MCF 10A (cell line): ENCODE measurements at regions of chr3 and their contacts with region 1.

Region 1: GRCh38 chr3:49454458-49454857 is 15.6 kb upstream of the DAG1 start:
- DNase-seq: peak; percentile 68
- H3K4me3 Mint-ChIP-seq: no peak overlapping the region
- H3K27ac Mint-ChIP-seq: no peak overlapping the region
- H3K4me1 Mint-ChIP-seq: peaks cover 10% of the 10 kb centered on the region
- H3K27me3 Mint-ChIP-seq: no peaks in the 10 kb centered on the region
- CTCF ChIP-seq: no peak

Region 2: GRCh38 chr3:48989796-48990635 is 464.4 kb before region 1 on chr3 and contains the start of gene P4HTM:
- CTCF ChIA-PET with region 1: interaction called, 7 read pairs
- POLR2A ChIA-PET with region 1: no interaction called
- intact Hi-C with region 1: loop called (anchors 2 kb)
- DNase-seq: peak; percentile 82
- H3K4me3 Mint-ChIP-seq: peak within 1 kb of the TSS; percentile 89
- H3K27ac Mint-ChIP-seq: peak within 1 kb of the TSS; percentile 71
- H3K4me1 Mint-ChIP-seq: peaks cover 29% of the 10 kb centered on the region
- H3K27me3 Mint-ChIP-seq: no peaks in the 10 kb centered on the region
- CTCF ChIP-seq: peak; percentile 13
- total RNA-seq, gene P4HTM: 18.8 and 26.1 TPM in 2 replicates

Region 3: DNA sequence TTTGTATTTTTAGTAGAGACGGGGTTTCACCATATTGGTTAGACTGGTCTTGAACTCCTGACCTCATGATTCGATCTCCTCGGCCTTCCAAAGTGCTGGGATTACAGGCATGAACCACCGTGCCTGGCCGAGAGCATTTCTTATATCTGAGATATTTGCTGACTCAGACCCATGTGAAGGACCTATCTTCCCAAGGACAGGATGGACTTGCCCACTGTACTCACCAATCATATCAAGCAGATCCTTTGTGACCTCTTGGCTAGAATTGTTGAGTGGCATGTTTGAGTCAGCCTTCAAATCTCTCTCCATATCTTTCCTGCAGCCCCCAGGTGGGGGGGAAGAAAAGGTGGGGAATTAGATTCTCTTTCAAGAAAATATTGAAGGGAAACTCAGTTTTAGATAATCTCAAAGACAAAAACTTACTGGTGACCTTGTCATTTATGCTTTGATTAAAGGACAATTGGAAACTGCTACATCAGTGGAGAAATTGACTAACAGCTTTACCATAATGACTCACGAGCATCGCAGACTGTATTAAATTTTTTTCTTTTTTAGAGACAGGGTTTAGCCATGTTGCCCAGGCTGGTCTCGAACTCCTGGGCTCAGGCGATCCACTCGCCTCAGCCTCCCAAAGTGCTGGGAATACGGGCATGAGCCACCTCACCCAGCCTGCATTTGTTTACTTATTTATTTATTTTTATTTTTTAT is 180.5 kb before region 1 on chr3:
- CTCF ChIA-PET with region 1: no interaction called
- POLR2A ChIA-PET with region 1: no interaction called
- intact Hi-C with region 1: no loop called
- DNase-seq: no peak
- H3K4me3 Mint-ChIP-seq: no peak overlapping the region
- H3K27ac Mint-ChIP-seq: no peak overlapping the region
- H3K4me1 Mint-ChIP-seq: no peaks in the 10 kb centered on the region
- H3K27me3 Mint-ChIP-seq: no peaks in the 10 kb centered on the region
- CTCF ChIP-seq: no peak

Region 4: GRCh38 chr3:49295489-49296058 is 158.9 kb before region 1 on chr3:
- CTCF ChIA-PET with region 1: interaction called, 5 read pairs
- POLR2A ChIA-PET with region 1: no interaction called
- intact Hi-C with region 1: loop called (anchors 1 kb)
- DNase-seq: peak; percentile 35
- H3K4me3 Mint-ChIP-seq: no peak overlapping the region
- H3K27ac Mint-ChIP-seq: peak overlapping the region; percentile 23
- H3K4me1 Mint-ChIP-seq: peaks cover 7% of the 10 kb centered on the region
- H3K27me3 Mint-ChIP-seq: no peaks in the 10 kb centered on the region
- CTCF ChIP-seq: peak; percentile 55

Region 5: GRCh38 chr3:49339945-49340800 is 114.3 kb before region 1 on chr3 and contains the start of gene USP4:
- CTCF ChIA-PET with region 1: interaction called, 5 read pairs
- POLR2A ChIA-PET with region 1: no interaction called
- intact Hi-C with region 1: loop called (anchors 1 kb)
- DNase-seq: peak; percentile 89
- H3K4me3 Mint-ChIP-seq: peak within 1 kb of the TSS; percentile 96
- H3K27ac Mint-ChIP-seq: peak within 1 kb of the TSS; percentile 87
- H3K4me1 Mint-ChIP-seq: peaks cover 19% of the 10 kb centered on the region
- H3K27me3 Mint-ChIP-seq: no peaks in the 10 kb centered on the region
- CTCF ChIP-seq: peak; percentile 26
- total RNA-seq, gene USP4: 52.6 and 54.1 TPM in 2 replicates

Region 6: GRCh38 chr3:49383387-49383786 is 71.1 kb before region 1 on chr3:
- CTCF ChIA-PET with region 1: interaction called, 3 read pairs
- POLR2A ChIA-PET with region 1: no interaction called
- intact Hi-C with region 1: loop called (anchors 2 kb)
- DNase-seq: no peak
- H3K4me3 Mint-ChIP-seq: no peak overlapping the region
- H3K27ac Mint-ChIP-seq: peak overlapping the region; percentile 27
- H3K4me1 Mint-ChIP-seq: peaks cover 17% of the 10 kb centered on the region
- H3K27me3 Mint-ChIP-seq: no peaks in the 10 kb centered on the region
- CTCF ChIP-seq: no peak

Region 7: GRCh38 chr3:49563040-49563578 is 108.7 kb after region 1 on chr3:
- CTCF ChIA-PET with region 1: no interaction called
- POLR2A ChIA-PET with region 1: no interaction called
- intact Hi-C with region 1: no loop called
- DNase-seq: no peak
- H3K4me3 Mint-ChIP-seq: no peak overlapping the region
- H3K27ac Mint-ChIP-seq: no peak overlapping the region
- H3K4me1 Mint-ChIP-seq: peaks cover 6% of the 10 kb centered on the region
- H3K27me3 Mint-ChIP-seq: peaks cover 43% of the 10 kb centered on the region
- CTCF ChIP-seq: no peak

Region 8: DNA sequence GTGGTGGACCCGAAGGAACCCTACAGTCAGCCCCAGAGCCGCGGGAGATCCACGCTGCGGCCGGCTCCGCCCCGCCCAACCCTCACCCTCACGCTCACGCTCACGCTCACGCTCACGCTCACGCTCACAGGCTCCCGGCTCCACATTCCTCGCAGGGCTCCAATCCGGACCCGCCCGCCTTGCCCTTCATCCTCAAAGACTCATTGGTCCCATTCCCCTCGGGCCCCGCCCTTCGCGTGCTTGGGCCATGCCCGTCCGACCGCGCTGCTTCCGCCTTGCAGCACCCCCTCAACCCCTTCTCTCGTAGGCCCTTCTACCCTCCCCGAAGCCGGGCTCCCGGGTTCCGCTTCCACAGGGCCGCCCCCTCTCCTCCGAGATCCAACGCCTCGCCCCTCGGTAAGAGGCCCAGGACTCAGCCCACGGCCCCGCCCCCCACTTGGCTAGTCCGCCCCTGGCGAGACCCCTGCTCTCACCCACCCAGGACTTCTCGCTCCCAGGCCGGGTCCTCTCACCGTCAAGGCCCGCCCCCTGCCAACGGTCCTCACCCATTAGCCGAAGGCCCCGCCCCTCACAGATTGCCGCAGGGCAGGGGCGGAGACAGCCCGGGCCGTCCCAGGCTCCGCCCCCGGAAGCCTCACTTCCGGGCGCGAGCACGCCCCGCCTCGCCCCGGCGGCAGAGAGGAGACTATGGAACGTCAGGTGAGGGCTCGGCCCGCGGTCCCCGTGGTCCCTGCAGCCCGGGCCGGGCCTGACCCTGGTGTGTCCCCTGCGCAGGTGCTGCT is 219.4 kb after region 1 on chr3 and contains the start of gene APEH:
- CTCF ChIA-PET with region 1: no interaction called
- POLR2A ChIA-PET with region 1: no interaction called
- intact Hi-C with region 1: loop called (anchors 5 kb)
- DNase-seq: peak; percentile 98
- H3K4me3 Mint-ChIP-seq: peak within 1 kb of the TSS; percentile 93
- H3K27ac Mint-ChIP-seq: peak within 1 kb of the TSS; percentile 99
- H3K4me1 Mint-ChIP-seq: peaks cover 6% of the 10 kb centered on the region
- H3K27me3 Mint-ChIP-seq: no peaks in the 10 kb centered on the region
- CTCF ChIP-seq: no peak
- total RNA-seq, gene APEH: 95.8 and 127 TPM in 2 replicates